AG04450 (cell line): ENCODE measurements at regions of chr7 and their contacts with region 1.

Region 1: GRCh38 chr7:23055582-23056178 is 41.8 kb upstream of the HYCC1 start:
- DNase-seq: peak; percentile 45
- H3K4me3 ChIP-seq: no peak overlapping the region
- H3K27ac ChIP-seq: no peak overlapping the region
- H3K27me3 ChIP-seq: no peaks in the 10 kb centered on the region
- CTCF ChIP-seq: peak; percentile 97

Region 2: DNA sequence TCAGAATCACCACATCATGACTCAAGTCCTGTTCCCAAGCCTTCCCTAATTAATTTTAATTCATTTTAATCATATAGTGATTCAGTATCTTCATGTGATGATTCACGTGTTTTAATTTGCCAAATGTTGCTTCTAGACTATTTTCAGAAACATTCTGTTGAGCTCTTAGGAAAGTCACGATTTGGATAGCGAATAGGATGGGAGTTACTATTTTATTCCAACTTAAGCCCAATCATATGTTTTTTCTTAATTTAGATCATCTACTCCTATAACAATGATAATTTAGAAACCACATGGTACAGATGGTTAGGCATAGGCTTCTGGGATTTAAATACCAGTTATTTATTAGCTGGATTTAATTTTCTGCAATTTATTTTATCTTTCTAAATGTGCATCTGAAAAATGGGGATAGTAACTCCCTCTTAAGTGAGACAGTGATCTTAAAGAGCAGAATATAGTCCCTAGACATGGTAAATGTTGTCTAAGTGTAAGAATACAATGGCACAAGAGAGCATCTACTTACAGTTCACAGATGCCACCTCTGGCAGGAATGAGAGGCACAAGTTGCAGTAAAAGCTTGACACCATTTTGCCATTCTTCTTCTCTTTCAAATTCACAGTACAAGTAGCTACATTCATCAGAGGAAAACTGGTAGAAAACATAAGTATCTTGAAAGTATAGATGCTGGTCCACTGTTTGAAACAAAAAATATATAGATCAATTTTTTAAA is 747.7 kb before region 1 on chr7:
- CTCF ChIA-PET with region 1: no interaction called
- POLR2A ChIA-PET with region 1: no interaction called
- DNase-seq: no peak
- H3K4me3 ChIP-seq: no peak overlapping the region
- H3K27ac ChIP-seq: no peak overlapping the region
- H3K27me3 ChIP-seq: no peaks in the 10 kb centered on the region
- CTCF ChIP-seq: no peak

Region 3: GRCh38 chr7:22559829-22560489 is 495.7 kb before region 1 on chr7:
- CTCF ChIA-PET with region 1: interaction called, 236 read pairs
- POLR2A ChIA-PET with region 1: no interaction called
- DNase-seq: peak; percentile 76
- H3K4me3 ChIP-seq: no peak overlapping the region
- H3K27ac ChIP-seq: no peak overlapping the region
- H3K27me3 ChIP-seq: no peaks in the 10 kb centered on the region
- CTCF ChIP-seq: peak; percentile 91

Region 4: DNA sequence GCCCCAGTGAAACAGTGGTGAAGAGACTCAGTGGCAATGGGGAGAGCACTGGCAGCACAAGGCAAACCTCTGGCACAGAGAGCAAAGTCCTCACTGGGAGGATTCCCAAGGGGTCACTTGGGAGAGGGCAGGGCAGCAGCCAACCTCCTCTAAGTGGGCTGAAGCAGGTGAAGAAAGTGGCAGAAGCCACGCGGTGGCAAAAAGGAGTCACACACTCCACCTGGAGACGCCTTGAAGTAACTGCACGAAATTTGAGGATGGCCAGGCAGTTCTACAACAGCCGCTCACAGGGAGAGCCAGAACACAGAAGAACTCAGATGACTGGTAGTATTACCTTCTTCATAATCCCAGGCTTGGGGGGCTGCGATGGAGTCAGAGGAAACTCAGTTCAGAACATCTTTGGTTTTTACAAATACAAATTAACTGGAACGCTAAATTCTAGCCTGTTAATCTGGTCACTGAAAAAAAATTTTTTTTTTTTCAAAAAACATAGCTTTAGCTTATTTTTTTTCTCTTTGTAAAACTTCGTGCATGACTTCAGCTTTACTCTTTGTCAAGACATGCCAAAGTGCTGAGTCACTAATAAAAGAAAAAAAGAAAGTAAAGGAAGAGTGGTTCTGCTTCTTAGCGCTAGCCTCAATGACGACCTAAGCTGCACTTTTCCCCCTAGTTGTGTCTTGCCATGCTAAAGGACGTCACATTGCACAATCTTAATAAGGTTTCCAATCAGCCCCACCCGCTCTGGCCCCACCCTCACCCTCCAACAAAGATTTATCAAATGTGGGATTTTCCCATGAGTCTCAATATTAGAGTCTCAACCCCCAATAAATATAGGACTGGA is 329.1 kb before region 1 on chr7:
- CTCF ChIA-PET with region 1: interaction called, 44 read pairs
- POLR2A ChIA-PET with region 1: no interaction called
- DNase-seq: peak; percentile 83
- H3K4me3 ChIP-seq: peak overlapping the region; percentile 76
- H3K27ac ChIP-seq: peak overlapping the region; percentile 97
- H3K27me3 ChIP-seq: no peaks in the 10 kb centered on the region
- CTCF ChIP-seq: peak; percentile 66

Region 5: DNA sequence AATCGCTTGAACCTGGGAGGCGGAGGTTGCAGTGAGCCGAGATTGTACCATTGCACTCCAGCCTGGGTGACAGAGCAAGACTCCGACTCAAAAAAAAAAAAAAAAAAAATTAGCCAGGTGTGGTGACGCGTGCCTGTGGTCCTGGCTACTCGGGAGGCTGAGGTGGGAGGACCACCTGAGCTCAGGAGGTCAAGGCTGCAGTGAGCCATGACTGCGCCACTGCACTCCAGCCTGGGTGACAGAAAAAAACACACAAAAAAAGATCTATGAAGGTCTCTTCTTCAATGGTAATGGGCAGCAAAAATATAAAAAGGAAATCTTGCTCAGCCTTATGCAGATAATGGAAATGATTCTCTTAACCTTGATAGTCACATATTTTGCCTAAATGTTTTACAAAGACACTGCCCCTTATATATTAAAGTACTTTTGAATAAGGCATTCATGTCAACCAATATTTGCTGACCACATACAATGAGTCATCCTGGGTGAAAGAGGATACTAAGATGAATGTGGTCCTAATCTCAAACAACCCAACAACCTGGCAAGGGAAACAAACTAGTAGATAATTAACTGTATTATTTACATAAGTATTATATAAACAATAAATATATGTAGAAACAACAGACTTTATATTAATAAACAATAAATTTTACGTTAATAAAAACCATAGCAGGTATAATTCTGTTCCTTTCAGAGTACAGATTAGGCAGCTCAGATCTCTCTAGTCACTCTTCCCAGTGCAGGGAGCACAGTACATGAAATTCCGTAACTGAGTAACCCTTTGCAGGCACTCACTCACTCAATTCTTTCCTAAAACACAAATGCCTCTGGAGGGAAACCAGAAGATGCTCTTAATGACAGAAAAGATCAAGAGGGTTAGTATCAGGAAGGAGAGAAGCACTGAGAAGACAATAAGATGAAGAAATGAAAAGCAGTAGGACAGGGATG is 241.1 kb before region 1 on chr7:
- CTCF ChIA-PET with region 1: interaction called, 15 read pairs
- POLR2A ChIA-PET with region 1: no interaction called
- DNase-seq: no peak
- H3K4me3 ChIP-seq: no peak overlapping the region
- H3K27ac ChIP-seq: no peak overlapping the region
- H3K27me3 ChIP-seq: no peaks in the 10 kb centered on the region
- CTCF ChIP-seq: no peak

Region 6: GRCh38 chr7:22860784-22861482 is 194.7 kb before region 1 on chr7:
- CTCF ChIA-PET with region 1: interaction called, 44 read pairs
- POLR2A ChIA-PET with region 1: no interaction called
- DNase-seq: no peak
- H3K4me3 ChIP-seq: no peak overlapping the region
- H3K27ac ChIP-seq: no peak overlapping the region
- H3K27me3 ChIP-seq: no peaks in the 10 kb centered on the region
- CTCF ChIP-seq: peak; percentile 47

Region 7: DNA sequence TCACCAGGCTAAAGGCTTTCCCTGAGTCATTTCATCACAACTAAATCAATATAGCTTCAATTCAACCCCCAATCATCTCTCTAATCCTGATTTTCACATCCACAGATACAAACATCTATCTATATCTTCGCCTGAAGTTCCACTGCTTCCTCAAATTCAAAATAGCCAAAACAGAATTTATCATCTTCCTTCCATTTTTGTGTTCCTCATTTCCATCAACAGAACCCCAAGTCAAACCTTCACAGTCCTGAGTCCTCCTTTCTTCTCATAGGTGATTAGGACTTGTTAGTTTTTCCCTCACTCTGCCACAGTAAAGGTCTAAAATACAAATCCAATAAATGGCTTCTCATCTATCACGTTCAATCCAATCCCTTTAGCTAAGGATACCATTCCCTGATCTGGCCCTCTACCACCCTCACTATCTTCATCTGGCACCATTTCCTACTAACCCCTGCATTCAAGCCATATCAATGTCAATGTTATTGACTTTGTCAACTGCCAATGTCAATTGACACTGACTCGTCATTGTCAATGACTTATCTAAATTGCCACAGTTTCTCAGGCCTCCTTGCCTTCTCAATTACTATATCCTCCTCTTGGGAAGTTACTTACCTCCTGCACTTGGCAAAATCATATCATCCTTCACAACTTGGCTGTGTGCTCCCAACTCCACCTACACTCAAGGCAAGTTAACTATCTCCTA is 44.3 kb before region 1 on chr7:
- CTCF ChIA-PET with region 1: interaction called, 13 read pairs
- POLR2A ChIA-PET with region 1: no interaction called
- DNase-seq: no peak
- H3K4me3 ChIP-seq: peak overlapping the region; percentile 85
- H3K27ac ChIP-seq: no peak overlapping the region
- H3K27me3 ChIP-seq: no peaks in the 10 kb centered on the region
- CTCF ChIP-seq: no peak

Region 8: GRCh38 chr7:23043441-23043840 is 12.2 kb before region 1 on chr7:
- CTCF ChIA-PET with region 1: interaction called, 50 read pairs
- POLR2A ChIA-PET with region 1: no interaction called
- DNase-seq: no peak
- H3K4me3 ChIP-seq: no peak overlapping the region
- H3K27ac ChIP-seq: no peak overlapping the region
- H3K27me3 ChIP-seq: no peaks in the 10 kb centered on the region
- CTCF ChIP-seq: no peak

Region 9: GRCh38 chr7:23157679-23158078 is 102.0 kb after region 1 on chr7:
- CTCF ChIA-PET with region 1: no interaction called
- POLR2A ChIA-PET with region 1: no interaction called
- DNase-seq: no peak
- H3K4me3 ChIP-seq: no peak overlapping the region
- H3K27ac ChIP-seq: no peak overlapping the region
- H3K27me3 ChIP-seq: no peaks in the 10 kb centered on the region
- CTCF ChIP-seq: no peak